ENCODE measurements at regions of chr12 and their contacts with region 1.

Region 1: GRCh38 chr12:103833891-103834290 is 7.1 kb downstream of the NT5DC3 start:
- DNase-seq: no peak
- ATAC-seq: no peak
- H3K4me3 Mint-ChIP-seq: no peak overlapping the region
- H3K27ac Mint-ChIP-seq: no peak overlapping the region
- H3K4me1 Mint-ChIP-seq: peaks cover 68% of the 10 kb centered on the region
- H3K27me3 Mint-ChIP-seq: no peaks in the 10 kb centered on the region
- CTCF ChIP-seq: no peak

Region 2: GRCh38 chr12:103816663-103817062 is 17.2 kb before region 1 on chr12:
- CTCF ChIA-PET with region 1: no interaction called
- POLR2A ChIA-PET with region 1: no interaction called
- intact Hi-C with region 1: loop called (anchors 2 kb)
- DNase-seq: no peak
- ATAC-seq: no peak
- H3K4me3 Mint-ChIP-seq: no peak overlapping the region
- H3K27ac Mint-ChIP-seq: no peak overlapping the region
- H3K4me1 Mint-ChIP-seq: no peaks in the 10 kb centered on the region
- H3K27me3 Mint-ChIP-seq: no peaks in the 10 kb centered on the region
- CTCF ChIP-seq: no peak

Region 3: DNA sequence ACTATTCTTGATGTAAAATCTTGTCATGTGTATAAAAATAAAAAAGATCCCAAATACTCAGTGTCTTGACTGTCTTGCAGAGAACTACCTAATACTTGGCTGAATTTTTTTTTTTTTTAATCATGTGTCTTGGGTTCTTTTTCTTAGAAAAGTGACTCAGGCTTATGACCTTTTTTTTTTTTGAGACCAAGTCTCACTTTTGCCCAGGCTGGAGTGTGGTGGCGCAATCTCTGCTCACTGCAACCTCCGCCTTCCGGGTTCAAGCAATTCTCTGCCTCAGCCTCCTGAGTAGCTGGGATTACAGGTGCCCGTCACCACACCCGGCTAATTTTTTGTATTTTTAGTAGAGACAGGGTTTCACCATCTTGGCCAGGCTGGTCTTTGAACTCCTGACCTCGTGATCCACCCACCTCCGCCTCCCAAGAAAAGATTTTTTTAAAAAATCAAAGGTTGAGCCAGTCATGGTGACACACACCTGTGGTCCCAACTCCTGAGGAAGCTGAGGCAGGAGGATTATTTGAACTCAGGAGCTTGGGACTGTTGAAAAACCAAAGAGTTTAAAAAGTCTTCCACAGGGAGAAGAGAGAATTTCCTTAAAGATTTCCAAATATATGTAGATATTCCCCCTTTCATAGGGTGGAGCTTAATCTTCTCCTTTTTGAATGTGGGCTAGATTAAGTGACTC is 114.1 kb after region 1 on chr12:
- CTCF ChIA-PET with region 1: no interaction called
- POLR2A ChIA-PET with region 1: no interaction called
- intact Hi-C with region 1: no loop called
- DNase-seq: no peak
- ATAC-seq: no peak
- H3K4me3 Mint-ChIP-seq: no peak overlapping the region
- H3K27ac Mint-ChIP-seq: no peak overlapping the region
- H3K4me1 Mint-ChIP-seq: no peaks in the 10 kb centered on the region
- H3K27me3 Mint-ChIP-seq: no peaks in the 10 kb centered on the region
- CTCF ChIP-seq: no peak

Region 4: GRCh38 chr12:104439137-104439536 is 605.2 kb after region 1 on chr12:
- CTCF ChIA-PET with region 1: no interaction called
- POLR2A ChIA-PET with region 1: no interaction called
- intact Hi-C with region 1: no loop called
- DNase-seq: no peak
- ATAC-seq: no peak
- H3K4me3 Mint-ChIP-seq: no peak overlapping the region
- H3K27ac Mint-ChIP-seq: no peak overlapping the region
- H3K4me1 Mint-ChIP-seq: no peaks in the 10 kb centered on the region
- H3K27me3 Mint-ChIP-seq: peaks cover 2% of the 10 kb centered on the region
- CTCF ChIP-seq: no peak